Astrocyte of the cerebellum (primary cell): ENCODE measurements at regions of chr15 and their contacts with region 1.

Region 1: GRCh38 chr15:45529613-45530012 is 7.1 kb upstream of the SLC30A4 start:
- DNase-seq: no peak
- H3K4me3 ChIP-seq: no peak overlapping the region
- CTCF ChIP-seq: no peak

Region 2: DNA sequence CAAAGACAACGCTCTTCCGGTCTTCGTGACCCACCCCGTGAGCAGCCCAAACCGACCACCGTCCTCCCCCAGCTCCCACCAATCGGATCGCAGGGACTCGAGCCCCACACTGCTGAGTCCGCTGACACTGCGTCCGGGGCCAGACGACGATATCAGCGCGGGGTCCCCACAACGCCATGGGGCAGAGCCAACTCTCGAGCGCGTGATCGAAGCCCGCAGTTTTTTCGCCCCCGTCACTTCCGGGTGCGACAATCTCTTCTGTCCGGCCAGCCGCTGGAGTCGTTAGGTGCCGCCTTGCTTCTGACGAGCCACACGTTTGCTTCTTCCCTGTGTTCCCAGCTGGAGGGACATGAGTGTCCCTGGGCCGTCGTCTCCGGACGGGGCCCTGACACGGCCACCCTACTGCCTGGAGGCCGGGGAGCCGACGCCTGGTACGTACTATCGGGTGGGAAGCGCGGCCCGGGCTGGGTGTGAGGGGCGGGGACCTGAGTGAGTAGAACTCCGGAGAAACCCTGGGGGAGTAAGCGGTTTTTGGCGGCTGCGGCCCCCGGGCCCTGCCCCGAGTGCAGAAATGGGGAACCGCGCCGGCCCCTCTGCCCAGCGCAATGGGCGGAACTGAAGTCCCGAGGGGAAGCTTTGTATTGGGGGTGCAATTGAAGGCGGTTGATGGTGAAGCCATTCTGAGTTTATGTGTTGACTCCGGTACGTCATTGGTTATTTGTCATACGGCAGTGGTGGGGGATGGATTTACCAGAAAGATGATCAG is 57.7 kb after region 1 on chr15 and contains the start of gene BLOC1S6:
- in situ Hi-C with region 1: loop called (anchors 5 kb)
- DNase-seq: peak; percentile 82
- H3K4me3 ChIP-seq: peak within 1 kb of the TSS; percentile 94
- CTCF ChIP-seq: no peak

Region 3: DNA sequence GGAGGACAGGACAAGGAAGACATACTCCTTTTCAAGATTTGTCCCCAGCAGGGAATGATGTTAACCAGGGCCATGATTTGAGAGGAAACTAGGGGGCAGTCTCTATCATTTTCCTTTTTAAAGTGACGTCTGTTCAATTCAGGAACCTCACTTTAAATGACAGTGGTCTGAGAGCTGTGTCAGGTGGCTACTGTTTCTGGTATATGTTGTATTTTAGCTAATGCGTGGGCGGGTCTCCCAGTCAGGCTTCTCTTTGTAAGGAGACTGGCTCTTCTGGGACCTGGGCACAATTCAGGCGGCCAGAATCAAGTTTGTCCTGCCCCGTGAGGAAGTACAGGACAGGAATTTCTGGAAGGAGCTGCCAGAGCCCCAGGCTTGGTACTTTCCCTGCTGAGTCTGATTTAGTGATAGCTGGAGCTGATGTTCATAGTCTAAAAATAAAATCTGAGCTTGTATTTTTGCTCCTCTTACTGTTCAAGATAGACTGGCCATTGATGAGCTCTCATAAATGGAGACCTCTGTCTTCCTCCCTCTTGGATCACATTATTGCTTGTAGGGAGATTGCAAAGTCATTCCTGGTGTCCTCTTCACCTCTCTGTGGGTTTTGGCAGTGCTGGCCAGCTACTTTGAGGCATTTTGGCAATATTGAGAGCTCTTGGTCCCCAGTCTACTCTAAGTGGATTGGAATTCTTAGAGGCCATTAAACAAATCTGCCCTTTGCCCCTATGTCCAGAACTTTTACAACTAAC is 130.8 kb after region 1 on chr15:
- in situ Hi-C with region 1: no loop called
- DNase-seq: no peak
- H3K4me3 ChIP-seq: no peak overlapping the region
- CTCF ChIP-seq: no peak